ENCODE measurements at regions of chr10 and their contacts with region 1.

Region 1: DNA sequence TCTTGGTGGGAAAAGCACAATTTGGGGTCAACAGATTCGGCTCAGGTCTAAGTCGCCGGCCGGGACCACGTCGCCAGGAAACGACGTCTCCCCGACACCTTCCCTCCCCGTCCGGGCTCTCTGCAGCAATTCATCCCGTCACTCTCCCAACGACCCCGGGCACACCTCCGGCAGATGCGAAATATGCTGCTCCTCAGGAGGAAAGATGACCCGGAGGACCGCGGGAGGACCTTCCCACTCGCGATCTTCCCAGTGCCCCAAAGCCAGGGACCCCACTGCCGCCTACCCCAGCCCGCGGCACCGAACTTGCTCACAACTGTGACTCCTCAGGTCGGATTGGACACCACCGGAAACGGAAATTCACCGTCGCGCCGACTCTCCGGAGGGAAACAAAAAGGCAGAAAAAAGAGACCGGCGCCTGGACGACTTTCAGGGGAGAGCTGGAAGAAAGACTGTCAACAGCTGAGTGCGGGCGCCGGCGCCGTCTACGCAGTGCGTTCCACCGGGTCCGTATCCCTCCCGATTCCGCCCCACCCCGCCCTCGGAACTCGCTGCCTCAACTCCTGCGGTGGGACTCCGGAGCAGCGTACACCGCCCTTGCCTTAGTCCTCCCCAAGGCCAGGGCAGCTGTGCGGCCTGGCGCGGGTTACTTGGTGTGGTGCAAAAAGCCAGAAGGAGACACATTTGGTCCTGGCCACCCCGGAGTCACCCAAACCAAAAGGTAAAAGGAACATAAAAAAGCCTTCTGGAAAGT is 13.8 kb upstream of the SEC24C start:
- DNase-seq: peak; percentile 96
- H3K4me3 Mint-ChIP-seq: peak overlapping the region; percentile 95
- H3K27ac Mint-ChIP-seq: peak overlapping the region; percentile 94
- H3K4me1 Mint-ChIP-seq: no peaks in the 10 kb centered on the region
- H3K27me3 Mint-ChIP-seq: no peaks in the 10 kb centered on the region
- CTCF ChIP-seq: no peak

Region 2: DNA sequence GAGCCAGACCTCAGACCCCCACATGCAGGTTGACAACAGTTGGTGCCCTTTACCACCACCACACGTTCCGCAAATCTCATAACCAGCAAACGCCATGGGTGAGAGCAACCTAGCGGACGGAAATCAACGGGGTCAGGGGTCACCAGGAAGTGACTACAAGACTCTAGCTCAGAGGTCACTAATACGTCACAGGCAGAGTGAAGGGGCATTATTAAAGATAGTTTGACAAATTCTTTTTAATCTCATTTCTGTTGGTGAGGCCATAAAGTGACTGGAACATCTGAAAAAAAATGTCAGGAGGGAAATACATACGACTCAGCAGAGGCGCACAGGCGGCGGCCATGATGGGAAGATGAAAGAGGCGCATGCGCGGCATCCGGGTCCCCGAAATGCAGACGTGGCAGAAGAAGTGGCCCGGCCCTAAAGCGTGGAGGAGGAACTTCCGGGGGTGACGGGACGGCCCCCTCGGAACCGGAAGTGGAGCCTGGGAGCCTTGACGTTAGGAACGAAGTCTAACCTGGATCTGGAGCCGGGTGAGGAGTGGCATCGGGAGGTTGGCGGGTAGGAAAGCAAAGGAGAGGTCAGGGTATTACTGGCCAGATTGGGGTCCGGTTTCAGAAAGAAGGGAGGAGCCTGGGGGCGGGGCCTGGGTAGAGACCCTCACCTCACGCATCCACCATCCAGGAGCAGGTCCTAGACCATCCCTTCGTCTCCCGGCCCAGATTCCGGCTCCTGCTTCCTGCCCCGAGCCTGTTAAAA is 13.8 kb after region 1 on chr10 and contains the start of gene SEC24C:
- CTCF ChIA-PET with region 1: interaction called, 10 read pairs
- intact Hi-C with region 1: no loop called
- DNase-seq: peak; percentile 97
- H3K4me3 Mint-ChIP-seq: peak within 1 kb of the TSS; percentile 98
- H3K27ac Mint-ChIP-seq: peak within 1 kb of the TSS; percentile 99
- H3K4me1 Mint-ChIP-seq: peaks cover 10% of the 10 kb centered on the region
- H3K27me3 Mint-ChIP-seq: no peaks in the 10 kb centered on the region
- CTCF ChIP-seq: no peak
- total RNA-seq, gene SEC24C: 91.7 and 98.4 TPM in 2 replicates